Mucosa of descending colon (tissue), 3 donors: ENCODE measurements at regions of chr7 and their contacts with region 1.

Region 1: DNA sequence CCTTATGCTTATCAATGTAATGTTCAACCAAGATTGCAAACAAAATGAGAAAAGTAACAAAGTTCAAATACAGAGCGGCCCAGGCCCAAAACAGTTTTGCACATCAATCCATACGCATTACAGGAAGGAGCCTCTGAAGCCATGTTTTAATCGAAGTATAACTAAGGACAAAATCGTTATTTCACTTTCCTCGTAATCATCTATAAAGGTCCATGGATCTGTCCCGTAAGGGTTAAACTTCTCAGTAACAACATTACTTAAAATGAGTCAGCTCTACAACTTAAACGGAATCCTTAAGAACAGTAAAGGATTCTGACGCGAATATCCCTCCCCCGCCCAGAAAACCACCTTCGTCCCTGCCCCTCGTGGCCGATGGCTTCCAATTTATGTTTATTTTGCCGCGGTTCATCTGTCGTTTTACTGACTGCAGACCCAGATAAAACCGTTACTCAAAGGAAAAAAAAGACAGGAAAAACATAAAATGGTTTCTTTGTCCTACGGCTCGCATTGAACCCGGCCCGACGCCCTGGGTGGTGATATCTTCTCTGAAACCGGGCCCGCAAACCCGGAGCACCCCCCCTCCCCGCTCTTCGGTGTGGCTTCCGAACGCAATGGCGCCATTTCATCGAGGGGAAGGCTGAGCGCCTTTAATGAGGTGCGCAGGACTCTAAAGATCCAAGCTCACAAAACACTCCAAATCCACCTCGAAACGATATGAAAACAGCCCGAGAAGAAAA is 1.1 kb downstream of the HNRNPA2B1 start:
- DNase-seq: peak; percentile 77 to 81 (median 80)
- ATAC-seq: no peak
- H3K4me3 ChIP-seq: peak overlapping the region; percentile 97
- H3K4me1 ChIP-seq: peaks cover 29% of the 10 kb centered on the region
- CTCF ChIP-seq: no peak

Region 2: GRCh38 chr7:26090927-26091519 is 108.4 kb before region 1 on chr7:
- intact Hi-C with region 1: loop called in 1 of 2 experiments (anchors 5 kb)
- DNase-seq: peak in 1 of 3 donors; percentile 39
- ATAC-seq: peak; percentile 65
- H3K4me3 ChIP-seq: no peak overlapping the region
- H3K4me1 ChIP-seq: no peaks in the 10 kb centered on the region
- CTCF ChIP-seq: peak; percentile 38

Region 3: DNA sequence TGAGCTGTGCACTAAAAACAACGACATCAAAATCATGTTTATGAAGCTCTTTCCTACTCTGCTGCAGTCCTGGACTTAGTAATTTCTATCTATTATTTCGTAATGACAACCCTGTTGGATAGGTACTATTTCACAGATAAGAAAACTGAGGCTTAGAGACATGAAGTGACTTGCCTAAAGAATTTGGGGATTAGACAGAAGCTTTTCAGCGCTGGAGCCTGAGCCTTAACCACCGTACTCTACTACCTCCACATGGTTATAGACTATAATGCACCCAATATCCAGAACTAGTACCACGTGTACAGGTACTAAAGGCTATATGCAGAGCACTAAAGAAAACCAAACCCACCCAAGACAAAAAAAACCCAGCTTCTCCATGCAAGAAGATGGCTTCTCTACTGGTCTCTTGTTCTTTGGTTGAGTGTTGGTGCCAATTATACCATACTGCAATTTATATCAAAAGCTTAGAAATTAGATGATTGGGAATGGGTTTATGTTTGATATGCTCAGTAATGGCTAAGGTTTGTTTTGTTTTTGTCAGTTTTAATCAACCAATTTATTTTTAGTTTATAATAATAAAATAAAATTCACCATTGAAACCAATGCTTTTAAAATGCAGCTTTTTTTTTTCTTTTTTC is 85.6 kb after region 1 on chr7:
- intact Hi-C with region 1: no loop called
- DNase-seq: no peak
- ATAC-seq: peak; percentile 51
- H3K4me3 ChIP-seq: no peak overlapping the region
- H3K4me1 ChIP-seq: no peaks in the 10 kb centered on the region
- CTCF ChIP-seq: no peak